ENCODE measurements at regions of chr2 and their contacts with region 1.

Region 1: GRCh38 chr2:32168513-32168912 is 2.8 kb downstream of the SLC30A6 start:
- DNase-seq: no peak
- ATAC-seq: no peak
- H3K4me3 ChIP-seq: no peak overlapping the region
- H3K4me3 Mint-ChIP-seq: peak overlapping the region; percentile 1
- H3K27ac ChIP-seq: no peak overlapping the region
- H3K27ac Mint-ChIP-seq: no peak overlapping the region
- H3K4me1 ChIP-seq: peaks cover 4% of the 10 kb centered on the region
- H3K4me1 Mint-ChIP-seq: peaks cover 56% of the 10 kb centered on the region
- H3K27me3 ChIP-seq: no peaks in the 10 kb centered on the region
- H3K27me3 Mint-ChIP-seq: no peaks in the 10 kb centered on the region
- CTCF ChIP-seq: no peak

Region 2: GRCh38 chr2:31233741-31234682 is 934.5 kb before region 1 on chr2 and contains the start of gene EHD3:
- CTCF ChIA-PET with region 1: no interaction called
- POLR2A ChIA-PET with region 1: no interaction called
- intact Hi-C with region 1: loop called in 1 of 2 experiments (anchors 10 kb)
- DNase-seq: peak; percentile 51 to 85 (median 71)
- ATAC-seq: peak; percentile 97
- H3K4me3 ChIP-seq: peak within 1 kb of the TSS; percentile 73
- H3K4me3 Mint-ChIP-seq: peak within 1 kb of the TSS; percentile 86
- H3K27ac ChIP-seq: no peak within 1 kb of the TSS
- H3K27ac Mint-ChIP-seq: peak within 1 kb of the TSS; percentile 78
- H3K4me1 ChIP-seq: peaks cover 20% of the 10 kb centered on the region
- H3K4me1 Mint-ChIP-seq: peaks cover 31% of the 10 kb centered on the region
- H3K27me3 ChIP-seq: no peaks in the 10 kb centered on the region
- H3K27me3 Mint-ChIP-seq: peaks cover 9% of the 10 kb centered on the region
- CTCF ChIP-seq: no peak
- total RNA-seq, gene EHD3: 1.4 to 1.7 TPM

Region 3: GRCh38 chr2:32200814-32201213 is 32.3 kb after region 1 on chr2:
- CTCF ChIA-PET with region 1: no interaction called
- POLR2A ChIA-PET with region 1: no interaction called
- intact Hi-C with region 1: no loop called
- DNase-seq: no peak
- ATAC-seq: no peak
- H3K4me3 ChIP-seq: no peak overlapping the region
- H3K4me3 Mint-ChIP-seq: no peak overlapping the region
- H3K27ac ChIP-seq: no peak overlapping the region
- H3K27ac Mint-ChIP-seq: no peak overlapping the region
- H3K4me1 ChIP-seq: no peaks in the 10 kb centered on the region
- H3K4me1 Mint-ChIP-seq: no peaks in the 10 kb centered on the region
- H3K27me3 ChIP-seq: no peaks in the 10 kb centered on the region
- H3K27me3 Mint-ChIP-seq: no peaks in the 10 kb centered on the region
- CTCF ChIP-seq: no peak

Region 4: DNA sequence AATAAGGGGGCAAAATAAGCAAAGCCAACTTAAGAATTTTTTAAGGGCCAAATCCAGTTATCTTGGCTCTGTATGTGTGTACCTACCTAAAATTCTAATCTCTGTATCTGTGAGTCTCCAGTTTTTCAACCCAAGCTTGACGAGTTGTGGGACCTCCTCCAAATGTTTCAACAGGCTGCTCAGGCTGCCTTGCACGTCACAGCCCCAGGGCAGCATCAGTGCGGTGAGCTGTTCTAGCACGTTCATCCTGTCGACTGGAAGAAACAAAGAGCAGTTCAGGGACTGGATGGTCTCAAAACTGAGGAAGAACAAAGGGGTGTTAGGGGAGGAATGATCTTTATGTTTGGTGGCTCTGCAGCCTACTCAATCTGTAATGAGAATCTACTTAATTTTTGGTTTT is 66.8 kb after region 1 on chr2:
- CTCF ChIA-PET with region 1: no interaction called
- POLR2A ChIA-PET with region 1: no interaction called
- intact Hi-C with region 1: no loop called
- DNase-seq: no peak
- ATAC-seq: no peak
- H3K4me3 ChIP-seq: no peak overlapping the region
- H3K4me3 Mint-ChIP-seq: no peak overlapping the region
- H3K27ac ChIP-seq: no peak overlapping the region
- H3K27ac Mint-ChIP-seq: no peak overlapping the region
- H3K4me1 ChIP-seq: no peaks in the 10 kb centered on the region
- H3K4me1 Mint-ChIP-seq: no peaks in the 10 kb centered on the region
- H3K27me3 ChIP-seq: no peaks in the 10 kb centered on the region
- H3K27me3 Mint-ChIP-seq: no peaks in the 10 kb centered on the region
- CTCF ChIP-seq: no peak

Region 5: GRCh38 chr2:32277674-32278482 is 109.4 kb after region 1 on chr2 and contains the start of gene YIPF4:
- CTCF ChIA-PET with region 1: no interaction called
- POLR2A ChIA-PET with region 1: interaction called, 4 read pairs
- intact Hi-C with region 1: loop called in 1 of 2 experiments (anchors 2 kb)
- DNase-seq: peak; percentile 79 to 94 (median 86)
- ATAC-seq: peak; percentile 98
- H3K4me3 ChIP-seq: peak within 1 kb of the TSS; percentile 85
- H3K4me3 Mint-ChIP-seq: peak within 1 kb of the TSS; percentile 97
- H3K27ac ChIP-seq: peak within 1 kb of the TSS; percentile 80 to 81
- H3K27ac Mint-ChIP-seq: peak within 1 kb of the TSS; percentile 99
- H3K4me1 ChIP-seq: peaks cover 36% of the 10 kb centered on the region
- H3K4me1 Mint-ChIP-seq: peaks cover 32% of the 10 kb centered on the region
- H3K27me3 ChIP-seq: no peaks in the 10 kb centered on the region
- H3K27me3 Mint-ChIP-seq: no peaks in the 10 kb centered on the region
- CTCF ChIP-seq: no peak
- total RNA-seq, gene YIPF4: 7.7 to 9.7 TPM